ENCODE measurements at regions of chr18 and their contacts with region 1.

Region 1: DNA sequence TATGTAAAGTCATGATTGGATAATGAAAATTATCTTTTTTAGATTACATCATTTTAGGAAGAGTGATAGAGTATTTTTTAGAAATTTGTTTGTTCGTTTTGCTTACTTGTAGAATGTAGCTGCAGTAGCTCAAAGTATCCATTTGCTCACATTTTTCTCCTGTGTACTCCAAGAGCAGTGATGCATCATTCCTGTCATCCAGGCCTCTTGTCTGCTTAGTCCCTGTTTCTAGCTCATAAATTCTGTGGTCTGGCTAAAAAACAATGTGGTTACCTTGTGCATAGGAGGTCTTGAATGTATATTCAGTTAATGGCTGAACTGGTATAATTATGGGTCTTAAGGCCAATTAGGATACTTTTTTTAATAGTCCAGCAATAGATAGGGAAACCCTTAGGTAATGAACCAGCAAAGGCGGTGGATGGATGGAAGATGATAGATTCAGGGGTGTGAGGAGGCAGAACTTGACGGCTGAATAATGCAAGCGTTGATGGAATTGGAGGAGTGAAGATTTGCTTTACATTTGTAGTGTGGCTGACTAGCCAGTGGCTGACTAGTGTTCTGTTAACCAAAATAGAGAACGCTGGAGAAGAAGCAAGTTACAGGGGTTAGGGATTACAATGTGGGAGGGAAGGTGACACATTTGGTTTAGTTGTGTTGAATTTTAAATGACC is 145.0 kb downstream of the ZNF407 start:
- DNase-seq: no peak
- ATAC-seq: no peak
- H3K4me3 ChIP-seq: no peak overlapping the region
- H3K4me3 Mint-ChIP-seq: no peak overlapping the region
- H3K27ac ChIP-seq: no peak overlapping the region
- H3K27ac Mint-ChIP-seq: no peak overlapping the region
- H3K4me1 ChIP-seq: no peaks in the 10 kb centered on the region
- H3K4me1 Mint-ChIP-seq: peaks cover 0 to 3% (median 0%) of the 10 kb centered on the region in 3 donors
- H3K27me3 ChIP-seq: no peaks in the 10 kb centered on the region
- H3K27me3 Mint-ChIP-seq: no peaks in the 10 kb centered on the region

Region 2: GRCh38 chr18:74631623-74632283 is 111.0 kb before region 1 on chr18:
- CTCF ChIA-PET with region 1: no interaction called
- POLR2A ChIA-PET with region 1: no interaction called
- DNase-seq: peak in 30 of 35 experiments; percentile 6 to 81 (median 30)
- ATAC-seq: peak; percentile 83 to 95 (median 92)
- H3K4me3 ChIP-seq: peak overlapping the region; percentile 10 to 44
- H3K4me3 Mint-ChIP-seq: peak overlapping the region; percentile 69 to 78 (median 71)
- H3K27ac ChIP-seq: peak overlapping the region; percentile 77
- H3K27ac Mint-ChIP-seq: peak overlapping the region; percentile 97 to 98
- H3K4me1 ChIP-seq: peaks cover 26 to 30% of the 10 kb centered on the region in 2 experiments
- H3K4me1 Mint-ChIP-seq: peaks cover 51 to 74% (median 58%) of the 10 kb centered on the region in 3 donors
- H3K27me3 ChIP-seq: no peaks in the 10 kb centered on the region
- H3K27me3 Mint-ChIP-seq: no peaks in the 10 kb centered on the region

Region 3: DNA sequence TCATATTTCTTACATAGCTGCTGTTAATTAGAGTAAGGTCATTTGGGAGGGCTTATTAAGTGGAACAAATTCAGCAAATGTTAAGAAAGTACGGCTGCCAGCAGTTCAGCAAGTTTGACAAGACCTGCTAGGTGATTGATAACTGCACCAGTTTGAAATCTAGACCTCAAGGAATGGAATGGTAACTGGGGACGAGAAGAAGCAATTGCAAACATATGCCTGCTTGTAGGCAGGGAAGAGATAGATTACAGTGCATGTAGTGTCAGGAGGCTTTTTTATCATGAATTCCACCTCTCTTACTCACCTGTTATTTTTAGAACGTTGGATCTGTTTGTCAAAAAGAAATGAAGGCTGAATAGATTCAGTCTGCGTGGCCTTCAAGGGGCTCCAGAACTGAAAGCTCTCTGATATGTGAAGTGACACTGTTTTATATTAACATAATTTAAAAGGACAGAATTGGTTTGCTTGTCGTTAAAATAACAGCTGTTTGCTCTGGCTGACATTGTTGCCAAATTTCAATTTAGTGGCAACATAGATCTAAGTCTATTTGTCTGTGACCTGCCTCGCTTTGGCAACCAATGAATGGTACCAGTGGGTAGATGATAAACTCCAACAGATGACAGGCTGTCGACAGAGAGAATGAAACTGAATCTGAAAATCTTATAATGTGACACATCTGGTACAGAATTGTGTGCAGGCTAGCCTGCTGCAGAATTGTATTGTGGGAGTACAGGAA is 54.3 kb after region 1 on chr18:
- CTCF ChIA-PET with region 1: no interaction called
- POLR2A ChIA-PET with region 1: interaction called in 1 of 2 experiments, 12 read pairs
- DNase-seq: no peak
- ATAC-seq: no peak
- H3K4me3 ChIP-seq: no peak overlapping the region
- H3K4me3 Mint-ChIP-seq: no peak overlapping the region
- H3K27ac ChIP-seq: no peak overlapping the region
- H3K27ac Mint-ChIP-seq: no peak overlapping the region
- H3K4me1 ChIP-seq: no peaks in the 10 kb centered on the region
- H3K4me1 Mint-ChIP-seq: peaks cover 8 to 13% (median 12%) of the 10 kb centered on the region in 3 donors
- H3K27me3 ChIP-seq: no peaks in the 10 kb centered on the region
- H3K27me3 Mint-ChIP-seq: no peaks in the 10 kb centered on the region

Measured in T-cell (primary cell).